ENCODE measurements at regions of chr16 and their contacts with region 1.

Region 1: DNA sequence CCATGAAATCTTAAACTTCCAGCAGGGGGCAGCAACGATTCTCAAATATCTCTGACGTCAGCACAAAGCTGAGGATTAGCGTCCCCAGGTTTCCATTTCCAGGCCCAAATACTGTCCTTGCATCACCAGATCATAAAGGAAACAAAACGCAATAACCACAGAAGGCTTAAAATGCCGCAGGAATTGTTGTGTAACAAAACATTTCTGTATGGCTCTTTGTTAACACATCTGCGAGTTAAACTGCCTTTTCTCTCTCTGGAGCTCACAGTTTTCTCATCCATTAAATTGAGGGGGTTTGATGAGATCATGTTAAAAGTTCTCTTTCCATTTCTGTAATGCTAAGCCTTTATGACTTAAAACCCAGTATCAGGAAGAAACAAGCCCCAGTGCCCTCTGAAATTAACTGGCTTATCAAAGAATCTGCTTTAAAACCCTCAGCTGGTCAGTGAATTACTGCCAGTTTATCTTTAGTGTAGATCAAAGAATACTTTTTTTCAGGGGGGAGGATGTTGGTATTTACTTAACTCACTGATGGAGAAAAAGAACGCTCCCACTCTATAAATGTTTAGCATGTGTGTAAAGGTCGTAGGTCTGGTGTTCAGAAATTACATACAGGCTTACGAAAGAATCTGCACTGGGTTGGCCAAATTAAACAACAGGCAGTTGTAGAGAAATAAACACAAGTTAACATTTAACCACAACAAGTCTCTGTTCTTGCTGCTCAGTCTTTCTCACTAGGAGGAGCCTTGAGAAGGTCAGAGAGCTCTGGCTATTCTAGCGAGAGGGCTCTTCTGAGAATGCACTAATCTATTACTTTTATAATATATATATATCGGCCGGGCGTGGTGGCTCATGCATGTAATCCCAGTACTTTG is 10.6 kb upstream of the TERF2 start:
- DNase-seq: peak; percentile 78

Region 2: GRCh38 chr16:69565671-69566239 is 169.3 kb after region 1 on chr16 and contains the start of gene NFAT5:
- intact Hi-C with region 1: loop called in 1 of 2 experiments (anchors 10 kb)
- DNase-seq: peak; percentile 95
- total RNA-seq, gene NFAT5: 43.0 to 55.3 TPM

Region 3: GRCh38 chr16:69644790-69645189 is 248.4 kb after region 1 on chr16:
- intact Hi-C with region 1: loop called in 1 of 2 experiments (anchors 10 kb)
- DNase-seq: no peak

Region 4: GRCh38 chr16:69754469-69755310 is 358.3 kb after region 1 on chr16 and contains the start of gene NOB1:
- intact Hi-C with region 1: loop called (anchors 5 to 10 kb)
- DNase-seq: peak; percentile 99
- total RNA-seq, gene NOB1: 24.2 to 25.3 TPM

Measured in posterior vena cava (tissue), 2 donors.